GM12878 (cell line): ENCODE measurements at regions of chr17 and their contacts with region 1.

Region 1: GRCh38 chr17:29180034-29180787 is at the start of gene MYO18A:
- DNase-seq: no peak
- ATAC-seq: peak; percentile 93
- H3K4me3 ChIP-seq: peak within 1 kb of the TSS; percentile 72; the same call in 1 of the 2 replicates
- H3K27ac ChIP-seq: no peak within 1 kb of the TSS
- H3K4me1 ChIP-seq: peaks cover 17% of the 10 kb centered on the region
- H3K27me3 ChIP-seq: no peaks in the 10 kb centered on the region
- CTCF ChIP-seq: peak; percentile 87 to 98 (median 89); a peak in 5 of 6 replicates
- EP300 ChIP-seq: no peak
- POLR2A ChIP-seq: peak; percentile 64
- RAD21 ChIP-seq: peak; percentile 58
- polyA plus RNA-seq, gene MYO18A: 2.9 to 3.9 TPM

Region 2: DNA sequence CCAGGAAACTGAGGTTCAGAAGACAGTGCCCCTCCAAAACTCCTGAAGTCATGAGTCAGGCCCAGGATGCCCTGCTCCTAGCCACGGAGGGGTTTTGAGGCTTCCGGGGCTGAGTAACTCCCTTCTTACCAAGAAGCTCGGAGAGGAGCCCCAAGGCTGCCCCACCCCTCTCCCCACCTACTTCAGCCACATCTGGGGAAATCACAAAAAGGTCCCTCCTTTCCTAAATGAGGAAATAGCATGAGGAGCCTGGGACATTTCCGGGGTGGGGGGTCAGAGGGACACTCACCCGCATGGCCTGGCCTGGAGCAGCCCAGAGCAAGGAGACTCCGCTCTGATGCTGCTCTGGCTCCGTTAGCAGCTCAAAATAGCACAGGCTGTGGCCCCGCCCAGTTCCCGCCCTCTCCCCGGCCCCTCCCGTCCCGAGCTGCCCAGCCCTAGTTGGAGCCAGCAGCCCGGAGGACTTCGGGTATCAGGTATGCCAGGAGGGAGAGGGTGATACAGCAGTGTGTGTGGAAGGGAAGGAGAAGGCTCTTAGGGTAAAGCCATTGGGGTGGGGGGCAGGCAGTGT is 40.1 kb before region 1 on chr17:
- CTCF ChIA-PET with region 1: interaction called, 260 read pairs
- POLR2A ChIA-PET with region 1: interaction called, 16 read pairs
- RAD21 ChIA-PET with region 1: interaction called, 207 read pairs
- SMC1A ChIA-PET with region 1: interaction called, 158 read pairs
- in situ Hi-C with region 1: no loop called
- intact Hi-C with region 1: no loop called
- DNase-seq: no peak
- ATAC-seq: peak; percentile 82
- H3K4me3 ChIP-seq: peak overlapping the region; percentile 81
- H3K27ac ChIP-seq: peak overlapping the region; percentile 76
- H3K4me1 ChIP-seq: peaks cover 31% of the 10 kb centered on the region
- H3K27me3 ChIP-seq: no peaks in the 10 kb centered on the region
- CTCF ChIP-seq: no peak
- EP300 ChIP-seq: no peak
- POLR2A ChIP-seq: peak; percentile 81
- RAD21 ChIP-seq: no peak

Region 3: GRCh38 chr17:29155227-29155965 is 24.8 kb before region 1 on chr17:
- CTCF ChIA-PET with region 1: interaction called, 260 read pairs
- POLR2A ChIA-PET with region 1: interaction called, 54 read pairs
- RAD21 ChIA-PET with region 1: interaction called, 207 read pairs
- SMC1A ChIA-PET with region 1: interaction called, 158 read pairs
- in situ Hi-C with region 1: no loop called
- intact Hi-C with region 1: no loop called
- DNase-seq: no peak
- ATAC-seq: peak; percentile 79
- H3K4me3 ChIP-seq: no peak overlapping the region
- H3K27ac ChIP-seq: no peak overlapping the region
- H3K4me1 ChIP-seq: peaks cover 11% of the 10 kb centered on the region
- H3K27me3 ChIP-seq: no peaks in the 10 kb centered on the region
- CTCF ChIP-seq: no peak
- EP300 ChIP-seq: no peak
- POLR2A ChIP-seq: no peak
- RAD21 ChIP-seq: no peak

Region 4: DNA sequence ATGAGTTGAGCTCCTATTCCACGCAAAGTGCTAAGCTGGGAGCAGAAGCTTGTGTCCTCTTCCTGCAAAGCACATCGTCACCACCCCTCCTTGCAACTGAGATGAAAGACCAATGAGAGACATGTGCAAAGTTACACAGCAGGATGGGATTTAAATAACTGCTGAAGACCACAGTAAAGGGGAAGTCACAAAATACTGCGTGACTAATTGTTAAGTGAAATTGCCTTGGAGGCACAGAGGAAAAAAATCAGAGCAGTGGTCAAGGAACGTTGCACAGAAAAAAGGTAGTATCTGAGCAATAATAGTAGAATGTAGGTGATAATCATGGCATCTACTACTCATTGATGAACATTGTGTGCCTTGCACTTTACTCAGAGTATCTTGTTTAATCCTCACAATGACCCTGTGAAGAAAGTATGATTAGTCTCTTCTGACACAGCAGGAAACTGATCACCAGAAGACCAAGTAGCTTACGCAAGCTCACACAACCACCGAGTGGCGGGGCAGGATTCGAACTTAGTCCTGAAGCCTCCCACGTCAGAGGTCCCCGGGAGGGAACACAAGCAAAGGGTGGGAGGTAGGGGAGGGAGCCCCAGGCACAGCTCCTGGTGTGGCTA is 15.4 kb after region 1 on chr17:
- CTCF ChIA-PET with region 1: interaction called, 17 read pairs
- POLR2A ChIA-PET with region 1: interaction called, 5 read pairs
- RAD21 ChIA-PET with region 1: interaction called, 6 read pairs
- SMC1A ChIA-PET with region 1: interaction called, 7 read pairs
- in situ Hi-C with region 1: no loop called
- intact Hi-C with region 1: no loop called
- DNase-seq: no peak
- ATAC-seq: peak; percentile 88
- H3K4me3 ChIP-seq: 0 out of 2 replicates have a peak overlapping the region, but pooled peaks have one; percentile 5
- H3K27ac ChIP-seq: peak overlapping the region; percentile 15; the same call in 1 of the 2 replicates
- H3K4me1 ChIP-seq: peaks cover 15% of the 10 kb centered on the region
- H3K27me3 ChIP-seq: no peaks in the 10 kb centered on the region
- CTCF ChIP-seq: no peak
- EP300 ChIP-seq: no peak; a peak in 1 of 4 replicates
- POLR2A ChIP-seq: no peak
- RAD21 ChIP-seq: no peak